ENCODE measurements at regions of chr7 and their contacts with region 1.

Region 1: GRCh38 chr7:24401628-24402593 is 117.9 kb downstream of the NPY start:
- DNase-seq: peak; percentile 30
- H3K4me3 ChIP-seq: peak overlapping the region; percentile 29 to 40 (median 35)
- H3K27ac ChIP-seq: peak overlapping the region; percentile 33
- H3K4me1 ChIP-seq: peaks cover 16% of the 10 kb centered on the region
- H3K27me3 ChIP-seq: no peaks in the 10 kb centered on the region
- CTCF ChIP-seq: peak; percentile 45 to 61

Region 2: DNA sequence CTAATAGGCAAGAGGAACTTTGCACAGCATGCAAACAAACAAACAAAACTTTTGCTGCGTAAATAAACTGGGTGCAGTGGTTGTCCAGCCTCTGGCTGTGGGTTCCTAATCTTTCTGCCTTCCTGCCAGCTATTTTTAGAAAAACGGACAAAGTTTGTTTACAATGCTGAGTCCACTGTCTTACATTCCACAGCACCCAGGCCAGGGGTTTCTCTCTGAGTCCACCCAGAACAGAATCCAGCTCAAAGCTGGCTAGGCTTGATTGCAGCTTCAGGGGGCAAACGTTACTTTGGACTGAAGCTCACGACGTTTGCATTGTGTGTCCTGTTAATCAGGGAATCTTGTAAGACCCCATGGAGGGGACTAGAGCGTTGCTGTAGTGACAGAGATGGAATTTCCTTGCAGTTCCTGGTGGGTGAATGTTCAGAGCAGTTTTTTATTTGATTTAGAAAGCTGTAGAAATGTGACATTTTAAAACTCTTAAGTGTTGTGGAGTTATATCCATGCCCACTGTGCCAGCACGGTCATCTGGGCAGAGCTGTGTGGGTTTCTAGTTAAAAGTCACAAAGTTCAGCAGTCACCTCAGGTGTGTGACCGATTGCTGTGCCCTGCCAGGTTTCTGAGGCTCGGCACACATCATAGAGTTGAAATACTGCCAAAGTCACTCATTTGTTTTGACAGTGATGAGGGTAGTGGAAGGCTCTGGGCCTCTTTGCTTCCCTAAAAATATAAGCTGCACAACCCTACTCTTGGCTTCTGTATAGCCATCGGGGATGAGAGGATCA is 444.9 kb before region 1 on chr7:
- CTCF ChIA-PET with region 1: no interaction called
- dilution Hi-C with region 1: no loop called
- in situ Hi-C with region 1: no loop called
- intact Hi-C with region 1: no loop called
- DNase-seq: no peak
- H3K4me3 ChIP-seq: no peak overlapping the region
- H3K27ac ChIP-seq: no peak overlapping the region
- H3K4me1 ChIP-seq: peaks cover 6% of the 10 kb centered on the region
- H3K27me3 ChIP-seq: no peaks in the 10 kb centered on the region
- CTCF ChIP-seq: no peak

Region 3: DNA sequence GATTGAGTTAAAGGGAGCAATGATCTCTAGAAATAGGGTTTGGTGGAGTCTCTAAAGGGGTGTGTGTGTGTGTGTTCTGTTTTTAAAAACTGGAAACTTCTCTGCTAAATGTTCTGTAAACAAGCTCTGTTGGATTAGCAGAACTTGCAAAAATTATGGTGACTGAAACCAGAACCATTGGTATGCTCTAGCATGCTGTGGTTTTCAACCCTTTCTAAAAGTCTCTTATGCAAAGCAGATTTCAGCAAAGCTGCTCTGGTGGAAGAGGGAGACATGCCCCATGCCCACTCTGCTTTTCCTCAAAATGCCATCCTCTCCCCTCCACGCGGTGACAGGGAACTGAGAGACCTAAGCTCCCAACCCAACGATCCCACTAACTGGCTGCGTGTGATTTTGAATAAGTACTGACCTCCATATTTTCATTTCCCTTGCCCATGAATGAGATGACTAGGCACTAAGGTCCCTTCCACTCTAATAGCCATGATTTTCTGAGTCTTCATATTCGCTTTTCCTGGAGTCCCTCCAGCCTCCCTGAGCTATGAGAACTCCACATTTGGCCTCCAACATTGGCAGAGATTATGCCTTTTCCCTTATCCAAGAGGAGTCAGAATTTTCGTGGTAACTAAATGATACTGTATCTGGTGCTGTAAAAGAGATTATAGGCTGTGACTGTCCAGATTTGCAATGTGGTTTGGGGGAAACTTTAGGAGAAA is 54.1 kb after region 1 on chr7:
- CTCF ChIA-PET with region 1: no interaction called
- dilution Hi-C with region 1: no loop called
- in situ Hi-C with region 1: no loop called
- intact Hi-C with region 1: no loop called
- DNase-seq: no peak
- H3K4me3 ChIP-seq: no peak overlapping the region
- H3K27ac ChIP-seq: no peak overlapping the region
- H3K4me1 ChIP-seq: no peaks in the 10 kb centered on the region
- H3K27me3 ChIP-seq: no peaks in the 10 kb centered on the region
- CTCF ChIP-seq: no peak

Region 4: DNA sequence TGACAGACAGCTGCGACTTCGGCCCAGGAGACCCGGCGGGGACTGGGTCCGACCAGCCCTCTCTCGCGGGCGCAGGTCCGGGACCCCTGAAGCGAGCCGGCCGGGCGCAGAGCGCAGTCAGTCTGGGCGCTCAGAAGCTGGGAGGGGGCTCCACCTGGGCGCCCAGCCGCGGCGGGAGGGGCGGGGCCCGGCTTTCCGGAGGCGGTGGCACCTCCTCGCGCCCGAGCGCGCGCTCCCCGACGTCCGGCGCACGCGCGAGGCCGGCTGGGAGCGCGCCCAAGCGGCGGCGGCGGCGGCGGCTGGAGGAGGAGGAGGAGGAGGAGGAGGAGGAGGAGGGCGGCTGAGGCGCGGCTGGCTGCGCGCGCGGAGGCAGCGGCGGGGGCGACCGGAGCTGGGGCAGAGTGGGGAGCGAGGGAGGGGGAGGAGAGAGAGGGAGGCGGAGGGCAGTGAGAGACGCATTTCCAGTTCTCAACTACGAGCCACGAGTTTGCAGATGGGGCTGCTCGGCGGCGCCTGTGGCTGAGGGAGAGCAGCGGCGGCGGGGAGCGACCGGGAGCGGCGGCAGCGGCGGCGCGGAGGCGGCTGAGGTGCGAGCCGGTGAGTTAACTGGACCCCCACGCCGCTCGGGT is 171.2 kb after region 1 on chr7 and contains the start of gene PALS2:
- CTCF ChIA-PET with region 1: no interaction called
- dilution Hi-C with region 1: no loop called
- in situ Hi-C with region 1: no loop called
- intact Hi-C with region 1: loop called (anchors 5 kb)
- DNase-seq: peak; percentile 80
- H3K4me3 ChIP-seq: peak within 1 kb of the TSS; percentile 84 to 91 (median 88)
- H3K27ac ChIP-seq: peak within 1 kb of the TSS; percentile 90
- H3K4me1 ChIP-seq: peaks cover 17% of the 10 kb centered on the region
- H3K27me3 ChIP-seq: no peaks in the 10 kb centered on the region
- CTCF ChIP-seq: no peak
- total RNA-seq, gene PALS2: 36.2 to 39.5 TPM

Region 5: GRCh38 chr7:24653316-24654085 is 251.6 kb after region 1 on chr7:
- CTCF ChIA-PET with region 1: no interaction called
- dilution Hi-C with region 1: no loop called
- in situ Hi-C with region 1: no loop called
- intact Hi-C with region 1: loop called (anchors 5 kb)
- DNase-seq: peak; percentile 42
- H3K4me3 ChIP-seq: peak overlapping the region; percentile 8 to 48 (median 47)
- H3K27ac ChIP-seq: peak overlapping the region; percentile 32
- H3K4me1 ChIP-seq: peaks cover 7% of the 10 kb centered on the region
- H3K27me3 ChIP-seq: no peaks in the 10 kb centered on the region
- CTCF ChIP-seq: no peak

Region 6: DNA sequence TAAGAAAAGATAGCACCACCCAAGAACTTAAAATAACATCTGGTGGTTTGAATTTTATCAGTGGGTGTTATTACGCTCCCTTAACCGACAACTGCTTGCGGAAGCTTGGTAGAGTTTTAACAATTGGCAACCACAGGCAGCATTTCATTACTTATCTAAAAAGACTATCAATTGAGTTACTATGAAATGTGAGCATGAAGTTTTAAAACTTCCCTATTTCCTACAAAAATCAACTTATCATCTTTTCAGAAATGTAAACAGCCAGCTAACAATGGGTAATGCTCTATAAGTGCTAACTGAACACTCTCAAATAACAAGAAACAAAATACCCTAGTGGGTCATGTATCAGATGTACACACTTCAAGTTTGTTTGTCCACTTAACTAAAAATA is 509.3 kb after region 1 on chr7:
- CTCF ChIA-PET with region 1: no interaction called
- dilution Hi-C with region 1: no loop called
- in situ Hi-C with region 1: no loop called
- intact Hi-C with region 1: no loop called
- DNase-seq: no peak
- H3K4me3 ChIP-seq: no peak overlapping the region
- H3K27ac ChIP-seq: no peak overlapping the region
- H3K4me1 ChIP-seq: peaks cover 45% of the 10 kb centered on the region
- H3K27me3 ChIP-seq: no peaks in the 10 kb centered on the region
- CTCF ChIP-seq: no peak

Measured in mammary epithelial cell (primary cell).